Ovary (tissue), 10 donors: ENCODE measurements at regions of chr10 and their contacts with region 1.

Region 1: GRCh38 chr10:15451137-15452094 is 80.3 kb upstream of the FAM171A1 start:
- DNase-seq: no peak
- H3K4me3 ChIP-seq: no peak overlapping the region
- H3K27ac ChIP-seq: no peak overlapping the region
- H3K4me1 ChIP-seq: no peaks in the 10 kb centered on the region
- H3K27me3 ChIP-seq: no peaks in the 10 kb centered on the region
- CTCF ChIP-seq: no peak
- EP300 ChIP-seq: no peak
- POLR2A ChIP-seq: no peak

Region 2: DNA sequence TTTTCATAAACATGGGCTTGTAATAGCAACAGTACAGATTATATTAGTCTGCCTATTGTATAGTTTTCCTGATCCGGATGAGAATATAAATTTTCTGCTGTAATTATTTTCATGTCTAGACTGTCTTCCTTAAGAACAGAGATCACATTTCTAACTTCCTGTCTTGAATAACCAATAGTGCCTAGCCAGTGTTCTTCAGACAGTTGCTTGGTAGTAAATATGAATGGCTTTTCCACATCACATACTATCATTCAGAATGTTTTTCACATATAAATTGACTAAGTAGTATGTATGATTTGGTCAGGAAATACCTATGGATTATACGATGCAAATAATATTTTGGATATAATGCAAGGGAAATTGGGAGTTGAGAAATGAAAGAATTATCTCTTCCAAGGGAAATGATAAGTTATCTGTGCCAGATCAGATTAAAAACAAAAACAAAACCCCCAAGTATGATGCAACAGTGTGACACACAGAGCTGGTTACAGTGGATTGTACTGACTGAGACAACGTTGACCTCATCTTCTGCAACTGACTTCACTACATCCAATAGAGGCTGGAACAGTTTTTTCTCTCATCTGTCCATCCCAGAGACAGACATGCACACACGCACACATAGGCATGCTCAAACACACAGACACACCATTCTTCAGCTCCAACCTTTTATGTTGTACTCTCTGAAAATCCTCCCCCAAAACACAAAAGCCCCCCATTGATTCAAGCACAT is 251.9 kb after region 1 on chr10:
- intact Hi-C with region 1: loop called in 1 of 4 experiments (anchors 10 kb)
- DNase-seq: no peak
- H3K4me3 ChIP-seq: no peak overlapping the region
- H3K27ac ChIP-seq: no peak overlapping the region
- H3K4me1 ChIP-seq: no peaks in the 10 kb centered on the region
- H3K27me3 ChIP-seq: no peaks in the 10 kb centered on the region
- CTCF ChIP-seq: no peak
- EP300 ChIP-seq: no peak
- POLR2A ChIP-seq: no peak

Region 3: DNA sequence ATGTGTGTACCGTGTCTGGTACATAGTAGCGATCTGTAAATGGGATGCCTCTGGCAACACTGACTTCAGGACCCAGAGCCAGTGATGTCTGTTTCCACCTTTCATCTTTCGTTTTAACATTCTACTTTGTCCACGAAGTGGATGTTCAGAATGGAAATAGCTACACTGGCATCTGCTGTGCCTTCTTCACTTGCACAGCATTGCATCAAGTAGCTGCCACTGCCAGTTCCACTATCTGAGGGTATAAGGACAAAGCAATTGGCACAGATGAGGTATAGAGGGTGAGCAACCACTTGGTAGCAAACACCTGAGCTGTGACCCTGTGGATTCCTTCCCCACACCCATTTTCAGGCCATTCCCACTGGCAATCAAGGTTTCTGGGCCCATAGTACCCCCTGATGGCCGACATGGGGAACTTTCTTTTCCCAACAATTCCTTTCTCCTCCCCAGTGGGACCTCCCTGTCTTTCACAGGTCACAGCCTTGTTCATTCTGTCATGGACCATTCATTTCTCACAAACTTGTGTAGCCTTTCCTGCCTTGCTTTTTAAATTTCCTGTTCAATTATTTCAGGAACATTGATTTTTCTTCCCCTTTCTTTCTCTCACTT is 264.3 kb after region 1 on chr10:
- intact Hi-C with region 1: no loop called
- DNase-seq: no peak
- H3K4me3 ChIP-seq: no peak overlapping the region
- H3K27ac ChIP-seq: no peak overlapping the region
- H3K4me1 ChIP-seq: peaks cover 6% of the 10 kb centered on the region
- H3K27me3 ChIP-seq: no peaks in the 10 kb centered on the region
- CTCF ChIP-seq: no peak
- EP300 ChIP-seq: no peak
- POLR2A ChIP-seq: no peak